ENCODE measurements at regions of chr9 and their contacts with region 1.

Region 1: DNA sequence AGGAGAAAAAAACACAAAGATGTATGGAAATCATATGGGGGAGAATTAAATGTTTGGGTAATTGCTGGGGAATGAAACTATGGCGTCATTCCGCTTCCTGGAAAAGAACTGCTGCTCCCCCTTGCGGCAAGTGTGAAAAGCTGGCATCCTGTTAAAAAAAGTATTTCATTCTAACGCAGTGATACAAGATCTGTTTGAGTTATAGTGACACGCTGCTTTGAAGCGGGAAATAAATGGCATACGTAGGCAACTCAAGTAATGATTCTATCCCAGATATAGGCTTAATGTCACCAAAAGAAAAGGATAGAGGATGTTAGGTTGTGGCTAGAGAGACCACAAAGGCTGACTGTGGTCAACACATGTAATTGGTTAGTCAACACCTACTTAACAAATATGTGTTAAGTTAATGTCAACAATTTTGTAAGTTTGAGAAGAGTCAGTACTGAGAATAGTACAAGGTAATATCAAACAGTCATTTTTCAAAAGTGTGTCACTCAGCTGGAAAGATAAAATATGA is 70.2 kb upstream of the ALDH1A1 start:
- DNase-seq: peak; percentile 42 to 96
- ATAC-seq: peak; percentile 77 to 89
- H3K4me3 ChIP-seq: no peak overlapping the region; the same call in 2 of the 3 replicates
- H3K27ac ChIP-seq: peak overlapping the region; percentile 87 to 89
- H3K4me1 ChIP-seq: peaks cover 27% of the 10 kb centered on the region
- CTCF ChIP-seq: peak; percentile 92
- EP300 ChIP-seq: peak in 1 of 2 experiments; percentile 41; a peak in 1 of 5 replicates
- POLR2A ChIP-seq: no peak
- RAD21 ChIP-seq: peak; percentile 96 to 97

Region 2: DNA sequence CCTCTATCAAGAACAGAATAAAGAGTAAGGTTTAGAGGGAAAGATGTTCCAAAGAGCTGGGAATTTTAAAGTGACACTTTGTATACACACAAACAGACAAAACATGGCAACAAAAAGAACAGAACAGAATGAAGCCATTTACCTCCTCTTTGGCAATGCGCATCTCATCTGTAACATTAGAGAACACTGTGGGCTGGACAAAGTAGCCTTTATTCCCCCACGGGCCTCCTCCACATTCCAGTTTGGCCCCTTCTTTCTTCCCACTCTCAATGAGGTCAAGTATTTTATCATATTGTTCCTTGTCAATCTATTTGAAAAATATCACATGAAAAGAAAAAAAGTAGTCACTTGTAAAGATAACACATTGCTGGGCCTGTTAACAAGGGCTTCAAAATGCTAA is 111.3 kb before region 1 on chr9:
- CTCF ChIA-PET with region 1: interaction called, 12 read pairs
- POLR2A ChIA-PET with region 1: no interaction called
- DNase-seq: peak in 1 of 2 experiments; percentile 31
- ATAC-seq: peak; percentile 1 to 23; a peak in 1 of 6 replicates
- H3K4me3 ChIP-seq: no peak overlapping the region
- H3K27ac ChIP-seq: peak overlapping the region; percentile 49 to 79
- H3K4me1 ChIP-seq: peaks cover 99% of the 10 kb centered on the region
- CTCF ChIP-seq: no peak
- EP300 ChIP-seq: no peak
- POLR2A ChIP-seq: no peak
- RAD21 ChIP-seq: no peak

Region 3: GRCh38 chr9:72952914-72953313 is 70.2 kb before region 1 on chr9 and contains the start of gene ALDH1A1:
- CTCF ChIA-PET with region 1: interaction called, 25 read pairs
- POLR2A ChIA-PET with region 1: interaction called, 6 read pairs
- DNase-seq: peak in 1 of 2 experiments; percentile 91
- ATAC-seq: peak; percentile 64 to 65; a peak in 5 of 6 replicates
- H3K4me3 ChIP-seq: peak within 1 kb of the TSS; percentile 67
- H3K27ac ChIP-seq: peak within 1 kb of the TSS; percentile 90 to 91
- H3K4me1 ChIP-seq: peaks cover 23% of the 10 kb centered on the region
- CTCF ChIP-seq: no peak
- EP300 ChIP-seq: no peak; a peak in 1 of 5 replicates
- POLR2A ChIP-seq: peak; percentile 84
- RAD21 ChIP-seq: 0 out of 5 replicates have a peak, but pooled peaks of 1 of the 2 experiments have one; percentile 9
- polyA plus RNA-seq, gene ALDH1A1: 6,119 and 8,617 TPM in 2 replicates

Region 4: GRCh38 chr9:72997387-72997995 is 25.6 kb before region 1 on chr9:
- CTCF ChIA-PET with region 1: interaction called, 21 read pairs
- POLR2A ChIA-PET with region 1: no interaction called
- DNase-seq: peak; percentile 25 to 98
- ATAC-seq: peak; percentile 93
- H3K4me3 ChIP-seq: peak overlapping the region; percentile 31
- H3K27ac ChIP-seq: peak overlapping the region; percentile 95 to 98
- H3K4me1 ChIP-seq: peaks cover 57% of the 10 kb centered on the region
- CTCF ChIP-seq: no peak
- EP300 ChIP-seq: peak; percentile 98 to 99
- POLR2A ChIP-seq: no peak; the same call in 1 of the 2 replicates
- RAD21 ChIP-seq: peak; percentile 41 to 50; a peak in 4 of 5 replicates

Region 5: DNA sequence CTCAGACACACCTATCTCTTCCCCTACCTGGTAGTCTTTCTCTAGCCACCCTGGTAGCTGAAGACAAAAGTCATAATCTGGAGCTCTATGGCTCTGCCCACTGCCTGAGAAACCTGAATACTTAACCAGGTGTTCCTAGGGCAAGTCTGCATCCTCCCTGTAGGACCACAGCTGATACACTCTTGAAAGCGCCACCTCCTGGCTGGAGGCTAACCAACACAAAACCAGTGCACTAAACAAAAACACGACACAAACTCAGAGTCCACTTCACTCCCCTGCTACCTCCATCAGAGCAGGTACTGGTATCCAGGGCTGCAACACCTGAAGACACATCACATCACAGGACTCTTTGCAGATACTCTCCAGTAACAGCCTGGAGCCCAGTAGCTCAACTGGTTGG is 44.0 kb after region 1 on chr9:
- CTCF ChIA-PET with region 1: interaction called, 12 read pairs
- POLR2A ChIA-PET with region 1: no interaction called
- DNase-seq: no peak
- ATAC-seq: peak in 1 of 2 experiments; percentile 26; a peak in 3 of 6 replicates
- H3K4me3 ChIP-seq: no peak overlapping the region
- H3K27ac ChIP-seq: peak overlapping the region in 1 of 2 experiments; percentile 74; a peak in 4 of 6 replicates
- H3K4me1 ChIP-seq: no peaks in the 10 kb centered on the region; the same call in 2 of the 3 replicates
- CTCF ChIP-seq: no peak
- EP300 ChIP-seq: no peak
- POLR2A ChIP-seq: no peak
- RAD21 ChIP-seq: no peak